GM18951 (cell line): ENCODE measurements at regions of chr10 and their contacts with region 1.

Region 1: DNA sequence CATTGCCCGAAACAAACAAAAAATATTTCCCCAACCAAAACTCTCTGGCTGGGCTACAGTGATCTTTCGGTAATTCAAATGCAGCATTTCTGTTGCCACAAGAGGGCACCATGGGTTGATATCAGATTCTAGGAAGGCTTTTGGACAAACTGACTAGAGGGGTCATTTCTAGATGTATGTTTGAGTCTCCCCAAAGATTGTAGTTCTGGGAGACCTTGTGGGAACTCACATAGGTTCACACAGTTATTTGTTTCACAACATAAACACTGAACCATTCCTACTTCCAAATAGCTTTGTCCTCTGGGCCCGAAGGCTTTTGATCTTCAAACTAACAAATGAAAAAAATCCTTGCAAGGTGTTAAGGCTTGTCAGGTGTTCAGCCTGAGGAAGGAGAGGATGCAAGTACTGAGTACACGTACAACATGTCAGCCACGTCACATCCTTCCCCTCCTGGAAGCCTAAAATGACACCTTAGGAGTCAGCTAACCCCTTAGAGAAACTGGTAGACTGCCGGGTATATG is 37.0 kb upstream of the IL15RA start:
- POLR2A ChIP-seq: no peak

Region 2: DNA sequence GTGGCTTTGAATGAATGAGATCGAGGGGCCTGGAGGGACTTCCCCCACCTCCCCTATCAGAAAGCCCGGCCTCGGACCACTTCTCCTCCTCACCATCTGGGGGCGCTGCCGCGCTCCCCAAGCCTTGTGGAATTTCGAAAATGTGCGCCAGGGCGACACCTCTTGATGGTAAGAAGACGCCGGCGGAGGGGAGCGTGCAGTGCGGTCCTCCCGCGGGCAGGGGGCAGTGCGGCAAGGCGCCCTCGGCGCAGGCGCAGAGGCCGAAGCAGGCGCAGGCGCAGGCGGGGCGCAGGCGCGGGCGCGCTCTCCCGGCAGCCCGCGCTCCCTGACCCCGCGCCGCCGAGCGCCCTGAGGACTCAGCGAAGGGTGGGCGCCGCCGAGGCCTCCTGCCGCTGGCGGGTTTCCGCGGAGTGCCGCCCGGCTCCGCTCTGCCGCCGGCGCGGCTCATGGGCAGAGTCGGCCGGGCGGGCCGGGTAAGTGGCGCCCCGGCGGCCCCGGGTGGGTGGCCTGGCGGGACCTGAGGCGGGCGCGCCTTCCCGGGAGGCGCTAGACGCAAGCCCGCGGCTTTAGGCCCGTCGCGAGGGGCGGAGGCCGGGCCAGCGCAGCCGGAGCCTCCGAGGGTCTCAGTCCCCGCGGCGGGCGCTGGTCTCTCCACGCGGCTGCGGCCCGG is 74.6 kb after region 1 on chr10 and contains the start of gene RBM17:
- in situ Hi-C with region 1: loop called (anchors 10 kb)
- POLR2A ChIP-seq: peak; percentile 92